PC-9 (cell line): ENCODE measurements at regions of chr4 and their contacts with region 1.

Region 1: GRCh38 chr4:150464523-150464922 is 117.4 kb upstream of the MAB21L2 start:
- DNase-seq: no peak
- H3K4me3 ChIP-seq: no peak overlapping the region
- H3K27ac ChIP-seq: no peak overlapping the region
- H3K4me1 ChIP-seq: peaks cover 10% of the 10 kb centered on the region; the same call in 1 of the 2 replicates
- H3K27me3 ChIP-seq: no peaks in the 10 kb centered on the region
- CTCF ChIP-seq: no peak

Region 2: GRCh38 chr4:150625033-150625432 is 160.5 kb after region 1 on chr4:
- CTCF ChIA-PET with region 1: no interaction called
- POLR2A ChIA-PET with region 1: interaction called, 10 read pairs
- intact Hi-C with region 1: no loop called
- DNase-seq: no peak
- H3K4me3 ChIP-seq: no peak overlapping the region
- H3K27ac ChIP-seq: no peak overlapping the region
- H3K4me1 ChIP-seq: no peaks in the 10 kb centered on the region
- H3K27me3 ChIP-seq: no peaks in the 10 kb centered on the region
- CTCF ChIP-seq: no peak

Region 3: GRCh38 chr4:151184523-151185458 is 720.3 kb after region 1 on chr4:
- CTCF ChIA-PET with region 1: no interaction called
- POLR2A ChIA-PET with region 1: interaction called, 10 read pairs
- intact Hi-C with region 1: no loop called
- DNase-seq: peak in 1 of 2 experiments; percentile 25
- H3K4me3 ChIP-seq: no peak overlapping the region
- H3K27ac ChIP-seq: peak overlapping the region; percentile 17; the same call in 1 of the 2 replicates
- H3K4me1 ChIP-seq: no peaks in the 10 kb centered on the region; the same call in 1 of the 2 replicates
- H3K27me3 ChIP-seq: no peaks in the 10 kb centered on the region
- CTCF ChIP-seq: no peak